Head of caudate nucleus (tissue), 42 donors: ENCODE measurements at regions of chr4 and their contacts with region 1.

Region 1: DNA sequence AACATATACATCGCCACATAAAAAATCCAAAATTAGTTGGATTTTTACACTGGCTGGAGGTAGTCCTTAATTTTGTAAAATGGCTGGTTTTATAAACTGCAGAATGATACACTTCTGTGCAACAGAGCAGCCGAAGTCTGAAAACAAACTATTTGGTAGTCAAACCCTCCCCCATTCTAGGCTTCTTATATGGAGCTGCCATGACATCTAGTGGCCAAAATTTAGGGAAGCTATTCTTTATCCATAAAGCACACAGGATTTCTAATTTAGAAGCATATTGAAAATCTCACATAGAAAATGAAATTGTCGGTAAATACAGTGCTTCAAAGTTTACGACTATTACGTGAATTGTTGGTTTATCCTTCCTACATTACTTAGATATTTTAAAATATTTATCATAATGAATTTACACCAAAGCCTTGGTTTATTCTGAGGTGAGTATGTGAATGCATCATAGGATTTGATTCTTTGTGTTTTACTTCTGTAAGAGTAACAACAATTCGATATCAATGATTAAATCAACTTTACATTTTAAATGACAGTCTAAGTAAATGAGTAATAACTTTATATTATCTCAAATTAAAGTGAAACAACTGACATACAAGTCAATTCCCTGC is 113.4 kb upstream of the FAM241A start:
- DNase-seq: peak in 21 of 42 donors; percentile 4 to 72 (median 41)

Region 2: DNA sequence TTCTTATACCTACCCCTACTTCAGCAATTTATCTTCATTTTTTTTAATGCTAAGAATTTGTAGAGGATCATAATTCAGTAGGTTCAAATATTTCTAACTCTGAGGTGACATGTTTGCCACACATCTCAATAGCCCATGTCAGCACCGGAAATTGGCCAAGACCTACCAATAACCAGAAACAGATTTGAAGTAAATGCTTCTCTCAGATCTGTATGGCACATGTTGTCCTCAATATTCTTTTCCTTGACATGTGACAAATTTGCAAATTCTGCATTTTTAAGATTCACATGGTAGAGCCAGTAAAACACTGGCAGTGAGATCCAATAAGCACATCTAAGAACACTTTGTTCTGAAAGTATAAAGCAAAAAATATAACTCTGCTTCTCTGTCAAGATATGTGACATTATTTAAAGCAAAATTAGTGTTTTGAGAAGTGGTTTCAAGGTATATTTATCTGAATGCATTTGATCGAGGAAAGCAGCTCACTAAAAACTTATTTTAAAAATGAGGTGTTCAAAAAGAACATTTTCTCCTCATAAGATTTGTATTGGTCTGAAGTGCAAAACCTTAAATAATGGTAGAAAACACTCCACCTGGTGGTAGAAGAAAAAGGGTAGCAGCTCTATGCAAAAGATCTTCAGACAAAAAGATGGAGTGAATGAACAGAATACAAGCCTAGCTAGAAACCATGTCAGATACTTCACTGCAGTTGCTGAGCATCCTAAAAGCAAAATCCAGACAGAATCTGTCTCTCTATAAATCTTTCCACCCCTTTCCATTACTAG is 400.4 kb before region 1 on chr4:
- intact Hi-C with region 1: loop called (anchors 10 kb)
- DNase-seq: no peak